RWPE1 (cell line): ENCODE measurements at regions of chr1 and their contacts with region 1.

Region 1: GRCh38 chr1:205335643-205336091 is 14.1 kb upstream of the NUAK2 start:
- DNase-seq: peak; percentile 90
- H3K27ac ChIP-seq: no peak overlapping the region
- CTCF ChIP-seq: peak; percentile 90

Region 2: DNA sequence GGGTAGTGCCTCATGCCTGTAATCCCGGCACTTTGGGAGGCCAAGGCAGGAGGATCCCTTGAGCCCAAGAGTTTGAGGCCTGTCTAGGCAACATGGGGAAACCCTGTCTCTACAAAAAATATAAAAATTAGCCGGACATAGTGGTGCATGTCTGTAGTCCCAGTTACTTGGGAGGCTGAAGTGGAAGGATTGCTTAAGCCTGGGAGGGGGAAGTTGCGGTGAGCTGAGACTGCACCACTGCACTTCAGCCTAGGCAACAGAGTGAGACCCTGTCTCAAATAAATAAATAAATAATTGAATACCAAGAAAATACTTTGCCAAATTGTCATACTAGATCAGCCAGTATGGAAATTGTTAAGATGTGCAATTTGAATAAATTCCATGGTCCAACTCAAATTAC is 208.0 kb before region 1 on chr1:
- CTCF ChIA-PET with region 1: no interaction called
- POLR2A ChIA-PET with region 1: no interaction called
- DNase-seq: no peak
- H3K27ac ChIP-seq: no peak overlapping the region
- CTCF ChIP-seq: no peak

Region 3: GRCh38 chr1:205321164-205321958 is 14.3 kb before region 1 on chr1 and contains the start of gene NUAK2:
- CTCF ChIA-PET with region 1: interaction called, 41 read pairs
- POLR2A ChIA-PET with region 1: no interaction called
- DNase-seq: peak; percentile 96
- H3K27ac ChIP-seq: peak within 1 kb of the TSS; percentile 98
- CTCF ChIP-seq: peak; percentile 33

Region 4: GRCh38 chr1:205346956-205347576 is 11.4 kb after region 1 on chr1:
- CTCF ChIA-PET with region 1: interaction called, 41 read pairs
- POLR2A ChIA-PET with region 1: no interaction called
- DNase-seq: peak; percentile 30
- H3K27ac ChIP-seq: no peak overlapping the region
- CTCF ChIP-seq: no peak

Region 5: DNA sequence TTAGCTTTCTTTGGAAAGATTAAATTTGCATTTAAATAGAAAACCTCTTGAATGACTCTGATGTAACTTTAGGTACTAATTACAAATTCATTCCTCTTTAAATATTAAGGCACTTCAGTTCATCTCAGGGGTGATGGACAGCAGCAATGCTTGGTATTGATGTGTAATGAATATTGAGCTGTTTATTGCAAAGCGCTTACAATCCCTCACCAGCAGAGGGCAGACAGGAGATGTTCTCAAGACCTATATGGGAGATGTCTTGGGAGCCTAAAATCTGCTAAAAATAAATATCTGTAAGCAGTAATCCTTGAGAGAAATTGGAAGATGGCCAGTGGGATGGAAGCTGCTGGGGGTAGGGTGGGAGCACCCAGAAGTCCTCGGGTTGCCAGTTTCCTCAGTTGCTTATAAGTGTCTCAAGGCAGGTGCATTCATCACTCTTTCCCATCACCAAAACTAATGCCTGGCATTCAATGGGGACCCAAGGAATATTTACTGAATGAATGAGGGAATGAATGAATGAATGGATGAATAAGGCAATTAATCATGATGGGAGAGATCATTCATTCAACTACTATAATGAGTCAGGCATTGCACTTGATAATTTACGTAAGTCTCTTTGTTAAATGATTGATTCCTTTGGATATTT is 18.7 kb after region 1 on chr1:
- CTCF ChIA-PET with region 1: interaction called, 41 read pairs
- POLR2A ChIA-PET with region 1: no interaction called
- DNase-seq: peak; percentile 50
- H3K27ac ChIP-seq: no peak overlapping the region
- CTCF ChIP-seq: peak; percentile 90

Region 6: GRCh38 chr1:205766038-205766437 is 430.4 kb after region 1 on chr1:
- CTCF ChIA-PET with region 1: no interaction called
- POLR2A ChIA-PET with region 1: no interaction called
- DNase-seq: peak; percentile 70
- H3K27ac ChIP-seq: peak overlapping the region; percentile 38; the same call in 1 of the 2 replicates
- CTCF ChIP-seq: no peak